T-cell (primary cell): ENCODE measurements at regions of chr3 and their contacts with region 1.

Region 1: DNA sequence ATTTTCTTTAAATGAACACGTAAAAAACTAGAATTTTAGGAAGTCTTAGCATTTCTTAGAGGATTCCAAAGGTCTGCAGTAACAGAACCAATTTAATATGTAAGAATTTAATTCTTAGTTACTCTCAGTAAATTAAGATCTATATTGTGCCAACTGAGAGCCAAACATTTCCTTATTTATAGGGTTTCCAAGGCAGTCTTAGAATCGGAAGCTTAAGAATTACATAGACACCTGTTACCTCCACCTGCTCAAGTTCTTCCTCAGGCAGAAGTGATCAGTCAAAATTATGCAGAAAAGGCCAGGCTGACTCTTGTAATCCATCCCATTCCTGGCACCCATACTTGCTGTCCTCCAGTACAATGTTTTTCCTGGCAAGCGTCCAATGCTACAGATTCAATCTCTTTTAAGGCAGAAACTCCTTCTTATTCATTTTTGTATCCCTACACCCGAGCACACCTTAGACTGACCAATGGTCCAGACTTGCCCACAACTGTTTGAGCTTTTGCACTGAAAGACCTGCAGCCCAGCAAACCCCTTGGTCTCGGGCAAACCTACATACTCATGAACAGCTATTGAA is 64.3 kb downstream of the NCEH1 start:
- DNase-seq: no peak
- ATAC-seq: no peak
- H3K4me3 ChIP-seq: no peak overlapping the region
- H3K4me3 Mint-ChIP-seq: no peak overlapping the region
- H3K27ac ChIP-seq: no peak overlapping the region
- H3K27ac Mint-ChIP-seq: no peak overlapping the region
- H3K4me1 ChIP-seq: no peaks in the 10 kb centered on the region
- H3K4me1 Mint-ChIP-seq: no peaks in the 10 kb centered on the region
- H3K27me3 ChIP-seq: no peaks in the 10 kb centered on the region
- H3K27me3 Mint-ChIP-seq: no peaks in the 10 kb centered on the region

Region 2: DNA sequence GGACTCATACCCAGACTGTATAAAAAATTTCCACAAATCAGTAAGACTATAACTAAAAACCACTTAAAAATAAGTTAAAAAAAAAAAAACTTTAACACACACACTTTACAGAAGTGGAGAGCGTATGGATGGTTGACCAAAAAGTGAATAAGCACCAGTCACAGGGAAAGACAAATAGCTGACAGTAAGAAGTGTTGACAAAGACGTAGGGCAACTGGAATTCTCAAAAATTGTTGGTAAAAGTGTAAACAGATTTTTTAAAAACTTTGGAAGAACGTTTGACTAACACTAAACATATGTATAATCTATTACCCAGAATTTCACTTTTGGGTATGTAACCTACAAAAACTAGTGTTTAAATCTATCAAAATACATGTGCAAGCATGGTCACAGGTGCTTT is 729.6 kb before region 1 on chr3:
- CTCF ChIA-PET with region 1: no interaction called
- POLR2A ChIA-PET with region 1: interaction called in 1 of 2 experiments, 13 read pairs
- DNase-seq: no peak
- ATAC-seq: no peak
- H3K4me3 ChIP-seq: no peak overlapping the region
- H3K4me3 Mint-ChIP-seq: no peak overlapping the region
- H3K27ac ChIP-seq: no peak overlapping the region
- H3K27ac Mint-ChIP-seq: no peak overlapping the region
- H3K4me1 ChIP-seq: no peaks in the 10 kb centered on the region
- H3K4me1 Mint-ChIP-seq: no peaks in the 10 kb centered on the region
- H3K27me3 ChIP-seq: peaks cover 0 to 3% of the 10 kb centered on the region in 2 experiments
- H3K27me3 Mint-ChIP-seq: peaks cover 14 to 28% of the 10 kb centered on the region in 2 donors

Region 3: DNA sequence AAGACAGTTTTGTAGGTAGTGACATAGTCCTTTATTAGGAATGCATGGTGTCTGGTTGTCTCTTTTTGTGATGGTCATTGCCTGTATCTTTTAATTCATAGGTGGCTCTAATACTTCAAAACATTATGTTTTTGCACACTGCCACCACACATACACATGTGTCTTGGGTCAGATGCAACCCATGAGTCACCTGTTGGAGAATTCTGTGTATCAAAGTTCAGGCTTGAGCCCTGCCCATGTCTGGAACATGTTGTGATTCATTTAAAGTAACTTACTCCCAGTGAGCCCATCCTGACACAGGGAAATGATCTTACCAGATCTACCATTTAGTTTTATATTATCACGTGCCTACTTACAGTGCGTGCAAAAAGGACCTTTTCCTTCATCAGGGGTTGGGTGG is 341.0 kb before region 1 on chr3:
- CTCF ChIA-PET with region 1: no interaction called
- POLR2A ChIA-PET with region 1: no interaction called
- DNase-seq: no peak
- ATAC-seq: no peak
- H3K4me3 ChIP-seq: no peak overlapping the region
- H3K4me3 Mint-ChIP-seq: no peak overlapping the region
- H3K27ac ChIP-seq: no peak overlapping the region
- H3K27ac Mint-ChIP-seq: no peak overlapping the region
- H3K4me1 ChIP-seq: no peaks in the 10 kb centered on the region
- H3K4me1 Mint-ChIP-seq: no peaks in the 10 kb centered on the region
- H3K27me3 ChIP-seq: no peaks in the 10 kb centered on the region
- H3K27me3 Mint-ChIP-seq: no peaks in the 10 kb centered on the region

Region 4: DNA sequence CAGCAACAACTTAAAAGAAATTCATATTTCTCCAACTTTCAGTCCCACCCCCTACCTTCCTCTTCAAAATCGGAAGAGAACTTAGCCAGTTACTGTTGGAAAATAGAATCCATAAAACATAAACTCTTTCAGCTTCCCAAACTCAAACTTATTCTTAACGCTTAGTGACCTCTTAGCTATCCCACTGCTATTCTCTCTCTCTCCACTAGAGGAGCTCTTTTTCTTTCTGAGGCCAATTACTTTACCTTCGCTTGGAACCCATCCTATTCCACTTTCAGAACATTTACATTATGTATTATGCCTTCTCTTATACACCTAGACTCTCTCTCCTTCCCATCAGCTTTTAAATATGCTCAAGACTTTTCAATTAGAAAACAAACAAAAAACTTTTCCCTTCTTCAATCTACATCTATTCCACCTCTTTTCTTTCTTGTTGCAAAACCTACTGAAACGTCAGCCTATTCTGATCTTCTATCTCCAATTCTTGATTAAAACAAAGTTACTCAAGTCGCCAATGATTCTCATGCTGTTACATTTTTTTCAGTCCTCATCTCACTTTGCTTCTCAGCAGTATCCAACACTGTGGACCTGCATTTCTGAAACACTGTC is 184.9 kb before region 1 on chr3:
- CTCF ChIA-PET with region 1: no interaction called
- POLR2A ChIA-PET with region 1: no interaction called
- DNase-seq: peak in 1 of 35 experiments; percentile 54
- ATAC-seq: peak in 2 of 4 experiments; percentile 39 to 63
- H3K4me3 ChIP-seq: no peak overlapping the region
- H3K4me3 Mint-ChIP-seq: no peak overlapping the region
- H3K27ac ChIP-seq: no peak overlapping the region
- H3K27ac Mint-ChIP-seq: no peak overlapping the region
- H3K4me1 ChIP-seq: no peaks in the 10 kb centered on the region
- H3K4me1 Mint-ChIP-seq: no peaks in the 10 kb centered on the region
- H3K27me3 ChIP-seq: peaks cover 0 to 2% of the 10 kb centered on the region in 2 experiments
- H3K27me3 Mint-ChIP-seq: peaks cover 2% of the 10 kb centered on the region in 2 donors